ENCODE measurements at regions of chr4 and their contacts with region 1.

Region 1: DNA sequence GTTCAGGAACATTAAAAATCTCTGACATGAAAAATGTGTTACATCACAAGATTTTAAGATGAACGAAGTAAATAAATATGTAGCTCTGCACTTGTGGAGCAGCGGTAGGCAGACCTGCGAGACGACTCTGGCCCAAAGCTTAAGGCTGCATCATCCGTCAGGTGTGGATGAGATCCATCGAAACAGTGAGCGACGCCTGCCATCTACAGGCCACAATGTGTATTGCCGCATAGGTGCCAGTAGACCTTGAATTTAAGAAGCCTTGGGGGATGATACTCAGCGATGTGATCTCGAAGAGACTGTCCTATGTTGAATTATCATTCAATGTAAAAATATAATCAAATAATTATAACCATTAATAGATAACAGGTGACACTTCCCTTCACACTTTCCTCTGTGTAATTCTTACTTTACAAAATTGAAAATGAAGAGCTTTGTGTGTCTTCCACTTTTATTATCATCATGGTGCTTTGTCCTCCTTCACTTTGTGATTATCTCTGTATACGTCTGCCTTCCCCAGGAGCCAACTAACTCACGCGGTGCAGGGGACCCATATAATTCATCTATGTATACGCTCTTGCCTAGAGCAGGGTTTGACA is 851.0 kb downstream of the RAB28 start:
- DNase-seq: peak; percentile 78
- H3K4me3 ChIP-seq: no peak overlapping the region
- H3K27ac ChIP-seq: no peak overlapping the region
- H3K4me1 ChIP-seq: no peaks in the 10 kb centered on the region
- H3K27me3 ChIP-seq: no peaks in the 10 kb centered on the region
- CTCF ChIP-seq: peak; percentile 76 to 80
- POLR2A ChIP-seq: no peak

Region 2: DNA sequence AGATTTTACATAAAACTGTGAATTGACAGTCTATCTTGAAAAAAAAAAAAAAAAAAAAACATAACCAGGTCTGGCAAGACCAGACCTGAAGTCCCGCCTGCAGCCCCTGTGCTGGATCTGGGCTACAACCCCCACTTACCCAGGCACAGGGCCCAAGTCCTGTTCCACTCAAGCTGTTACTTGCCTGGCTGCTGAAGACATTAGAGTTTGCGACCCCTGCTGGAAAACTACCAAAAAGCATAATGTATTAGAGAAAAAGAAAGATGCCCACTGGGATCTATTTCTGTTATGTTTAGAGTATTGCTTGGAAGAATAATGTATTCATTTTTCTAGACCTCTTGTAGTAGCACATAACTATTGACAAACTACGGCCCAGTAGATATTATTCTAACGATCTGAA is 1209.2 kb before region 1 on chr4:
- CTCF ChIA-PET with region 1: interaction called, 12 read pairs
- POLR2A ChIA-PET with region 1: no interaction called
- dilution Hi-C with region 1: no loop called
- intact Hi-C with region 1: loop called (anchors 1 kb)
- DNase-seq: peak; percentile 38
- H3K4me3 ChIP-seq: no peak overlapping the region
- H3K27ac ChIP-seq: no peak overlapping the region
- H3K4me1 ChIP-seq: peaks cover 16% of the 10 kb centered on the region
- H3K27me3 ChIP-seq: peaks cover 10 to 13% of the 10 kb centered on the region in 2 experiments
- CTCF ChIP-seq: peak; percentile 33 to 41
- POLR2A ChIP-seq: no peak

Region 3: DNA sequence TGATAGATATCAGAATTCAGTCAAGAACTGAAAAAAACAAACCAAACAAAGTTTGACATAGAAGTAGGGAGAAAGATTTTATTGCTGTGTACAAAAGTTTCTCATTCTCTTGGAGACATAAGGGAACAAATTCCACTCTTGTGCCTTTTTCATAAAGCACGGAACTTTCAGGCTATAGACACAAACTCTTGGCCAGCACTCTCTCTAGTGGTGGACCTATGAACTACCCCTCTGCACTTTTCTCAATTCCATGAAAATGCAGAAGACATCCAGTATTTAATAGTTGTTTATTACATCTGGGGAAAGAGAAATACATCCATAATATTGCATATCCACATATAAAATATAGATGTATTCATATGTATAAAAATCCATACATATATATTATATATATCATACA is 912.9 kb before region 1 on chr4:
- CTCF ChIA-PET with region 1: interaction called, 4 read pairs
- POLR2A ChIA-PET with region 1: no interaction called
- dilution Hi-C with region 1: no loop called
- intact Hi-C with region 1: loop called (anchors 2 kb)
- DNase-seq: peak; percentile 62
- H3K4me3 ChIP-seq: no peak overlapping the region
- H3K27ac ChIP-seq: no peak overlapping the region
- H3K4me1 ChIP-seq: peaks cover 9% of the 10 kb centered on the region
- H3K27me3 ChIP-seq: no peaks in the 10 kb centered on the region
- CTCF ChIP-seq: peak; percentile 62 to 77
- POLR2A ChIP-seq: no peak

Region 4: GRCh38 chr4:11765849-11766453 is 867.2 kb before region 1 on chr4:
- CTCF ChIA-PET with region 1: interaction called, 26 read pairs
- POLR2A ChIA-PET with region 1: no interaction called
- dilution Hi-C with region 1: no loop called
- intact Hi-C with region 1: no loop called
- DNase-seq: peak; percentile 75
- H3K4me3 ChIP-seq: no peak overlapping the region
- H3K27ac ChIP-seq: no peak overlapping the region
- H3K4me1 ChIP-seq: no peaks in the 10 kb centered on the region
- H3K27me3 ChIP-seq: no peaks in the 10 kb centered on the region
- CTCF ChIP-seq: peak; percentile 61 to 70
- POLR2A ChIP-seq: no peak

Region 5: GRCh38 chr4:11954093-11954492 is 679.1 kb before region 1 on chr4:
- CTCF ChIA-PET with region 1: interaction called, 8 read pairs
- POLR2A ChIA-PET with region 1: no interaction called
- dilution Hi-C with region 1: no loop called
- intact Hi-C with region 1: loop called (anchors 10 kb)
- DNase-seq: peak; percentile 79
- H3K4me3 ChIP-seq: no peak overlapping the region
- H3K27ac ChIP-seq: no peak overlapping the region
- H3K4me1 ChIP-seq: no peaks in the 10 kb centered on the region
- H3K27me3 ChIP-seq: no peaks in the 10 kb centered on the region
- CTCF ChIP-seq: peak; percentile 32 to 50
- POLR2A ChIP-seq: no peak

Region 6: DNA sequence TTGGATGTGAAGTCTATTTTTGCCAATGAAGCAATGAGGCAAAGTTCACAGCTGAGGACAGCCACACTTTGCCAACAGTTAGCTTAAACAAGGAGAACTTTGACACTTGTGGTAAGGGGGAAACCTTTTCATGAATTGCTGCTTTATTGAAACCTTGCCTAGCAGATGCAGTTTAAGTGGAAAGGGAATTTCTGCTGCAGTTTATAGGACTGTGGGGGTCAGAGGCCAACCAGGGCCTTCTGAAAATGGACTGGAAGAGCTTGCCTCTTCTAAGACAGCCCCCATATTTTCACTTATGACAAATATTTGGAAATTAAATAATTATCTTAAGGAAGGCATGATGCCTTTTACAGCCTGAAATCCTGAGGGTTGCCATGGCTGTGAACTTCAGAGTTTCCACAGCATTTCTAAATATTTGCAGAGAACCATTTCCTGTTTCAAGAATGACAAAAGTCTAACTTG is 300.6 kb after region 1 on chr4:
- CTCF ChIA-PET with region 1: no interaction called
- POLR2A ChIA-PET with region 1: no interaction called
- dilution Hi-C with region 1: no loop called
- intact Hi-C with region 1: no loop called
- DNase-seq: no peak
- H3K4me3 ChIP-seq: no peak overlapping the region
- H3K27ac ChIP-seq: no peak overlapping the region
- H3K4me1 ChIP-seq: no peaks in the 10 kb centered on the region
- H3K27me3 ChIP-seq: no peaks in the 10 kb centered on the region
- CTCF ChIP-seq: no peak
- POLR2A ChIP-seq: no peak

Measured in endothelial cell of umbilical vein (primary cell).